ENCODE measurements at regions of chr19 and their contacts with region 1.

Region 1: DNA sequence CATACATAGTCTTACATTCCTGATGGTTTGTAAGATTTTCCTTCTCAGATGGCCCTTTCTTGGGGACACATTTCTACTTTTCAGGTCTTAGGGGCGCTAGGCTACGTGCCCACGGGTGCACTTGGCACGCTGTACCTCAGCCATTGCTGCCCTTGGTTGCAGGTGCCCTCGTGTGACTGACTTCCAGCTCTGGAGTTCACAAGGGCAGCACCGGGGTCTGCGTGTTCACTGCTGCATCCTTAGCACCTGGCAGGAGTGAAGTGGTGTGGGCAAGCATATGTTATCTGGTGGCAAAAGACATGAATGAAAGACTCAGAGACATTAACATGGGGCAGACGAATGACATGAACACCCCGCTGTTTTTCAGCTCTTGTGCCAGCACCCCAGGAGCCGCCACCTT is 13.3 kb upstream of the WDR88 start:
- DNase-seq: no peak
- H3K4me3 Mint-ChIP-seq: no peak overlapping the region
- H3K27ac Mint-ChIP-seq: no peak overlapping the region
- H3K4me1 Mint-ChIP-seq: no peaks in the 10 kb centered on the region
- H3K27me3 Mint-ChIP-seq: no peaks in the 10 kb centered on the region
- CTCF ChIP-seq: no peak

Region 2: GRCh38 chr19:33096005-33096404 is 22.6 kb before region 1 on chr19:
- CTCF ChIA-PET with region 1: interaction called, 10 read pairs
- POLR2A ChIA-PET with region 1: no interaction called
- intact Hi-C with region 1: no loop called
- DNase-seq: no peak
- H3K4me3 Mint-ChIP-seq: no peak overlapping the region
- H3K27ac Mint-ChIP-seq: no peak overlapping the region
- H3K4me1 Mint-ChIP-seq: peaks cover 12% of the 10 kb centered on the region
- H3K27me3 Mint-ChIP-seq: no peaks in the 10 kb centered on the region
- CTCF ChIP-seq: no peak